Left ventricle myocardium superior (tissue), 1 donor: ENCODE measurements at regions of chr15 and their contacts with region 1.

Region 1: GRCh38 chr15:30962079-30962478 is 29.3 kb downstream of the MTMR10 start:
- DNase-seq: peak; percentile 38
- ATAC-seq: peak; percentile 86

Region 2: GRCh38 chr15:30919877-30920550 is 42.1 kb before region 1 on chr15:
- intact Hi-C with region 1: loop called (anchors 10 kb)
- DNase-seq: no peak
- ATAC-seq: no peak